Posterior vena cava (tissue), 2 donors: ENCODE measurements at regions of chr22 and their contacts with region 1.

Region 1: DNA sequence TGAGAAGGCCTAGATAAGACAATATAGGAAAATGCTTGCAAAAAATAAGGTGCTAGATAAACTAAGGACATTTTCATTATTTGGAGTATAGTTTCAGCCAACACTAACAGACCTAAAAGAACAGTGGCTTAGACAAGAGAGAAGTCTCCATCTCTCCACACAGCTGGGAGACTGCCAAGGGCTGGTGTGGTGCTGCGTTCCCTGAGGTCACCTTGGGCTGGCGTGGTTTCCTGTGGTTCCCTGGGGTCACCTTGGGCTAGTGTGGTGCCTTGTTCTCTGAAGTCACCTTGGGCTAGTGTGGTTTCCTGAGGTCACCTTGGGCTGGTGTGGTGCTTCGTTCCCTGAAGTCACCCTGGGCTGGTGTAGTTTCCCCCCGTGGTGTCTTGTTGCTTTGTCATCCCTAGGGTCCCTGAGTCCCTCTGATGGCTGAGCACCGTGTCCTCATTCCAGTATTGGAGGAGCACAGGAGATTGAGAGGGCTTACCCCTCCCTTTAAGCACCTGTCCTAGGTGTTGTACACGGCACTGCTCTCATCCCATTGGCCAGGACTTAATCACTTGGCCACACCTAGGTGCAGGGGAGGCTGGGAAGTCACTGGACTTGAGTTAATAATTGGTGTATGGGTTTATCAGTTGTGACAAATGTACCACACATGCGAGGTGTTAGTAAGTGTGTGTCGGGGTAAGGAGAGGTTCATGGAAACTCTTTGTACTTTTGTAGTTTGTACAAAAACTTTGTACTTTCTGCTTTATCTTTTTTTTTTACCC is 14.9 kb downstream of the SAMM50 start:
- DNase-seq: no peak

Region 2: DNA sequence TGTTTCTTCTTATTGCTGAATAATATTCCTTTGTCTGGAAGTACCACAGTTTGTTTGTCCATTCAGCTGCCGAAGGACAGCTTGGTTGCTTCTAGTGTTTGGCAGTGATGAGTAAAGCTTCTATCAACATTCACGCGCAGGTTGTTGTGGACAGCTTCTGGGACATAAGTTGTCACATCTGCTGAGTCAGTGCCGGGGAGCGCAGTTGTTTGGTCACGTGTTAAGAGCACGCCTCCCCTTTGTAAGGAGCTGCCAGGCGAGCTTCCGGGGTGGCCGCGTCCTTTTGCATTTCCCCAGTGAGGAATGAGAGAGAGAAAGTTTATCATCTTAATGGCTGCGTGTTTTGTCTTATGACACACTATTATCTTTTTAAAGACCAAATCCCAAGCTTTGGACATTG is 15.4 kb after region 1 on chr22:
- intact Hi-C with region 1: no loop called
- DNase-seq: no peak

Region 3: DNA sequence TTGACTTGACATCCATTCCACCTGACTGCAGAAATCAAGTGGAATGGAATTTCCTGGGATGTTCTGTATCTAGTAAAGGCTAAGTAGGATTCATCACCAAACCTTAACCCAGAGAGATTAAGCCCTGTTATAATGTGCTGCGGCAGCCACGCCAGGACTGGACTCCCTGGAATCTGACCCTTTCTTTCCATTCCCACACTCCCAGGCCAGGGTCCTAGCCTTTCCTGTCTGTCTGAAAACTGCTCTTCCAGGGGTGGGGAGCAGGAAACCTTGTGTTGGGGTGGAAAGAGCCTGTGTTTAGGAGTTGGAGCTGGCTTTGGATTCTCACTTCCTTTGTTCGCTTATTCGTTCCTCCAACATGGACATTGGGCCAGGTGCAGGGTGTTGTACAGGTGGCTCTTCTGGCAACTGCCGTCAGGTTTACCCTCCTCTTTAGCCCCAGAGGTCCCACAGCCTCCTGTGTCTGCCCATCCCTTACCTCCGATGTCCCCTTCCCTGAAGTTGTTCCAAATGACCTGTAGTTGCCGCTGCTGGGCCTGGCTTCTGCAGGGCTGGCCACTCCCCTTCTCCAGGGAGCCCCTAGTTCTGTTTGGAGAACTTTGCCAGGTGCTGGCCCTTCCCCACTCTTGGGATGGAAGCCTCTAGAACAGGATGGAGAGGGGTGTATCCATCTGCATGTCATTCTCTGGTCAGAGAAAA is 33.4 kb after region 1 on chr22:
- intact Hi-C with region 1: loop called in 1 of 2 experiments (anchors 2 kb)
- DNase-seq: no peak